Activated naive CD4-positive, alpha-beta T cell treated with anti-CD3 and anti-CD28 coated beads, Interleukin-2, amount 10 ng/mL, durations not matched to agents 7 days and 5 days (primary cell): ENCODE measurements at regions of chr16 and their contacts with region 1.

Region 1: DNA sequence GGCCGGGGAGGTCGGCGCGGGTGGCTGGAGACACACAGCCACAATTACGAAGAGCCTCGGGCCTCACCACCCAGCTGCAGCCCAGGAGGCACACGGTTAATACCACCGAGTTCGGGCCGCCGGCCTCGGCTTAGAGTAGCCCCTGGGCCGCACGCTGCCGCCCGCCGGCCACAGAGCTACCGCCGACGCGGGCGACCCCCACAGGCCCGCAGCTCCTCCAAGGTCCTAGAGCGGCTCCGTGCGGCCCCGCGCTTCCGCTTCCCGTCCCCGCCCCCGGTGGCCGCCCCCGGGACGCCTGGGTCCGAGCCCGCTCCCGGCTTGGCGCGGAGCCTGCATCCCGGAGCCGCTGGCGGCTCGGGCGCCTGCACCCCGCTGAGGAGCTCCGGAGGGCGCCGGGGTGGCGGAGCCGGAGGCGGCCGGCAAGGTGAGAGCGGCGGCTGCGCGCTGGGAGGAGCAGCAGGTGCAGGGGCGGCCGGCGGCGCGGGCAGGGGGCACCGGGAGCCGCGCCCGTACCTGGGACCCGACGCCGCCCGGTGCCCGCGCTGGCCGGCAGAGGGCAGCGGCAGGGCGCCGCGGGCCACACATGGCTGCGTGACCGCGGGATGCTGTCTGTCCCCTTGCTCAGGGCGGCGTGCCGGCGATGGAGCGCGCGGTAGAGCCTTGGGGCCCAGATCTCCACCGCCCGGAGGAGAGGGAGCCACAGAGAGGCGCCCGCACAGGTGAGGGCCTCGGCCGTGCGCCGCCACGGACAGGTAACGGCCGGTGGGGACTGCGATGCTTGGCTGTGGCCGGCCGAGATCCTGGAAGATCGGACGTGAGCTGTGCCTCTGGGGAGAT is at the start of gene ZNF48:
- DNase-seq: peak; percentile 69
- H3K4me3 Mint-ChIP-seq: peak within 1 kb of the TSS; percentile 88
- H3K27ac Mint-ChIP-seq: peak within 1 kb of the TSS; percentile 75
- H3K4me1 Mint-ChIP-seq: peaks cover 41% of the 10 kb centered on the region
- H3K27me3 Mint-ChIP-seq: peaks cover 14% of the 10 kb centered on the region

Region 2: DNA sequence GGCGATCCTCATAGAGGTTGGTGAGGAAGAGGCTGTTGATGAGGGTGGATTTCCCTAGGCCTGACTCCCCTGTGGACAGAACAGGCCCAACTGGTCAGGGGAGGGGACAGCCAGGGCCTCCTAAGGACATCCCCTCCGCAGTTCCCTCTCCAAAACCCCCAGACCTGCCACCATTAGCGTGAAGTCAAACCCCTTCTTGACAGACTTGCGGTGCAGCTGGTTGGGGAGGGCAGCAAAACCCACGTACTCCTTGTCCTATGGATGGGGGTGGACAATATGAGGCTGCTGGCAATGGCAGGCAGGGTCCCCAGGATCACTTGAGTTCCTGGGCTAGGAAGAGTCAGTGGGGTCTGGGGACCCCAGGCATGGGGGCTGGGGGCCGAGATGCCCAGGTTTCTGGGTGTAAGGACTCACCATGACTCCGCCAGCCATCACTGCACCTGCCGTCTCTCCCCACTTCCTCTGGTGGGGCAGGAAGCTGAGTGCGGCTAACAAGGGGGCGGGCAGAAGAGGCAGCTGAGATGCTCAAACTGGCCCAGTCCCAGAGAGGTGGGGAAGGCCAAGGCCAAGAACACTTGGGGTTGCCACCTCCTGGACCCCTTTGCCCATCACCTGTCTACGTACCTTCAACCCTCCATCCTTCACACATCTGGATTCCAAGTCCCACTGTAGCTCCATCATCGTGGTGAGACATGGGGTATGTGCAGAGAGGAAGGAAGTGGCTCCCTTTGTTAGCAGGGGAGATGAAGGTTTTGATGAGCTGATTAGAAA is 13.1 kb before region 1 on chr16 and contains the start of gene SEPTIN1:
- CTCF ChIA-PET with region 1: interaction called, 11 read pairs
- DNase-seq: peak; percentile 89
- H3K4me3 Mint-ChIP-seq: peak within 1 kb of the TSS; percentile 83
- H3K27ac Mint-ChIP-seq: peak within 1 kb of the TSS; percentile 97
- H3K4me1 Mint-ChIP-seq: peaks cover 66% of the 10 kb centered on the region
- H3K27me3 Mint-ChIP-seq: no peaks in the 10 kb centered on the region

Region 3: DNA sequence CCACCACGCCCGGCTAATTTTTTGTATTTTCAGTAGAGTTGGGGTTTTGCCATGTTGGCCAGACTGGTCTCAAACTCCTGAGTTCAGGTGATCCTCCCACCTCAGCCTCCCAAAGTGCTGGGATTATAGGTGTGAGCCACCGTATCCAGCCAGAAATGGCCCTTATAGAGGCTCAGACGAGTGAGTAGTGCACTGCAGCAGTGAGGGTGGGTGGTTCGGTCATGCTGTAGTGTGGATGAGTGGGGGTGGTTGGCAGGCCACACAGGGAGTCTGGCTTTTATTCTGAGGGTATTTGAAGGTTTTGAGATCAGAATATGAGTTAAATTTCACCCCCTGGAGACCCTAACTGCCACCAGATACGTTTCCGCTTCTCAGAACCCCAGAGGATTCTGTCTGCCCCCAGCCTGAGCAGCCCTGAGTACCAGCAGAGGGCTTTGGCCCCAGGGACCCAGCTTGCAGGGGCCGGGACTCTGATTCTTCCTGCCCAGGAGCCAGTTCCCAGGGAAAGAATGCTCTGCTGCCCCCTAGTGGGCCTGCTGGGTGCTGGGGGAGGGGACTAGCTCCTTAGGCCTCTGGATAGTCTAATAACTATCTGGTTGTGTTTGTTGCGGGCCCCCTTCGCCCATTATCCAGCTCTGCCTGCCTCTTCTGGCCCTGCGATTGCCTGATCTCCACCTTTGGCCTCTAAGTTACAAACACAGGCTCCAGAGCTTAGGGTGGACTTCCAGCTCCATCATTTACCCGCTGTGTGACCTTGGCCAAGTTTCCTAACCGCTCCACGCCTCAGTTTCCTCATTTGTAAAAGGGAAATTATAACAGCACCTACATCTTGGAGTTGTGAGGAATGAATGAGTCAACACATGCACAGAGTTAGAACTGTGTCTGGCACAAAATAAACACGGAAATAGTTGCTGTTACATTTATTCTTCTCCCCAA is 14.0 kb after region 1 on chr16:
- CTCF ChIA-PET with region 1: interaction called, 11 read pairs
- DNase-seq: peak; percentile 95
- H3K4me3 Mint-ChIP-seq: no peak overlapping the region
- H3K27ac Mint-ChIP-seq: no peak overlapping the region
- H3K4me1 Mint-ChIP-seq: peaks cover 31% of the 10 kb centered on the region
- H3K27me3 Mint-ChIP-seq: peaks cover 5% of the 10 kb centered on the region

Region 4: GRCh38 chr16:30526823-30527635 is 131.7 kb after region 1 on chr16:
- CTCF ChIA-PET with region 1: no interaction called
- DNase-seq: peak; percentile 98
- H3K4me3 Mint-ChIP-seq: peak overlapping the region; percentile 80
- H3K27ac Mint-ChIP-seq: peak overlapping the region; percentile 82
- H3K4me1 Mint-ChIP-seq: peaks cover 42% of the 10 kb centered on the region
- H3K27me3 Mint-ChIP-seq: peaks cover 14% of the 10 kb centered on the region